Activated B cell treated with CpG ODN at 0.5 μM for 24 hours (primary cell): ENCODE measurements at regions of chr9 and their contacts with region 1.

Region 1: DNA sequence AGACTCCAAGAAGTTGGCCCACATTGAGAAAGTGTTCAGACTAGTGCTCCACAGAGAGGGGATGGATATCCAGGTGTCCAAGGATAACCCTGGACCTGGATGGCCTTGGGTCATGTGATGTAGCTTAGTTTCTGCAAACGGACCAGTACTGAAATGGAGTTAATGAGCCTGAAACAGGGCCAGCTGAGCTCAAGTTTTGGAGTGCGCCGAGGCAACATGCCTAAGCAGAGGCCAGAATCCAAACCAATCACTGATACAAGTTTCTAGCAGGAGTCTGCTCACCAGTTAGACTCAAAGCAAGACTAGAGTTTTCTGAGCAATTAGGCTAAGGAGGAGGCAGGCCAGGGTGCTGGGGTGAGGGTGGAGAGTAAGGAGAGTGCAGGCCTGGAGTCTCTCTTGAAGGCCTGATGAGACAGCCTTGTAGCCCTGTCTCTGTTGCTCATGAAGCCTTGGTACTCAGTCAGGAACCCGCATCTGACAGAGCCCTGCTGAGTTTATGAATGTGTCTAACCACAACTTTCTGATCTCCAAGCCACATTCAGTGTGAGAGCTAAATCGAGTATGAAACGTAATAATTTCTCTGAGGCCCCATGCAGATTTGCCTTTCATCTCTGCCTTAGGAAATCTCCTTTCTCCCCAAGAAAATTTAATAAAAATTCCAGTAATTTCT is 68.9 kb upstream of the EQTN start:
- DNase-seq: no peak
- ATAC-seq: peak; percentile 73
- H3K4me3 Mint-ChIP-seq: peak overlapping the region; percentile 65
- H3K27ac Mint-ChIP-seq: peak overlapping the region; percentile 63
- H3K4me1 Mint-ChIP-seq: peaks cover 61% of the 10 kb centered on the region
- H3K27me3 Mint-ChIP-seq: no peaks in the 10 kb centered on the region
- CTCF ChIP-seq: no peak

Region 2: DNA sequence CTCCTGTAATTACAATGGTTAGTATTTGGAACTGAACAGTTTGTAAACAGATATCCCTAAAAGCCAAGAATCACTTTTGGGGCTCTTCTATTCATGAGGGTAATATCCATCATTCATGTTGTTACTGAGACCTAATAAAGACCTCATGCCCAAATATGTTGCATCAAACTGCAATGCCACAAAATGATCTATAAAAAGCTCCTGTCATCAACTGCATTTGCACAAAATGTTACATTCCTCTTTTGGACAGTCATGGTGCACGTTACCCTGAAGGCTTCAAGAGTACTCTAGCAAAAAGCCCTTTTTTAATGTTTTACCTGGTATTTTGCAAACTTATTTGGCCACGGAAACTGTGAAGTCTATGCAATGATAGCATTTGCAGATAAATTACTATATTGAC is 54.7 kb before region 1 on chr9:
- CTCF ChIA-PET with region 1: no interaction called
- POLR2A ChIA-PET with region 1: no interaction called
- intact Hi-C with region 1: no loop called
- DNase-seq: no peak
- ATAC-seq: no peak
- H3K4me3 Mint-ChIP-seq: no peak overlapping the region
- H3K27ac Mint-ChIP-seq: no peak overlapping the region
- H3K4me1 Mint-ChIP-seq: no peaks in the 10 kb centered on the region
- H3K27me3 Mint-ChIP-seq: no peaks in the 10 kb centered on the region
- CTCF ChIP-seq: no peak

Region 3: GRCh38 chr9:27353474-27354229 is 12.2 kb before region 1 on chr9:
- CTCF ChIA-PET with region 1: interaction called, 4 read pairs
- POLR2A ChIA-PET with region 1: interaction called, 10 read pairs
- intact Hi-C with region 1: loop called (anchors 1 kb)
- DNase-seq: no peak
- ATAC-seq: peak; percentile 78
- H3K4me3 Mint-ChIP-seq: no peak overlapping the region
- H3K27ac Mint-ChIP-seq: peak overlapping the region; percentile 14
- H3K4me1 Mint-ChIP-seq: peaks cover 58% of the 10 kb centered on the region
- H3K27me3 Mint-ChIP-seq: no peaks in the 10 kb centered on the region
- CTCF ChIP-seq: no peak

Region 4: DNA sequence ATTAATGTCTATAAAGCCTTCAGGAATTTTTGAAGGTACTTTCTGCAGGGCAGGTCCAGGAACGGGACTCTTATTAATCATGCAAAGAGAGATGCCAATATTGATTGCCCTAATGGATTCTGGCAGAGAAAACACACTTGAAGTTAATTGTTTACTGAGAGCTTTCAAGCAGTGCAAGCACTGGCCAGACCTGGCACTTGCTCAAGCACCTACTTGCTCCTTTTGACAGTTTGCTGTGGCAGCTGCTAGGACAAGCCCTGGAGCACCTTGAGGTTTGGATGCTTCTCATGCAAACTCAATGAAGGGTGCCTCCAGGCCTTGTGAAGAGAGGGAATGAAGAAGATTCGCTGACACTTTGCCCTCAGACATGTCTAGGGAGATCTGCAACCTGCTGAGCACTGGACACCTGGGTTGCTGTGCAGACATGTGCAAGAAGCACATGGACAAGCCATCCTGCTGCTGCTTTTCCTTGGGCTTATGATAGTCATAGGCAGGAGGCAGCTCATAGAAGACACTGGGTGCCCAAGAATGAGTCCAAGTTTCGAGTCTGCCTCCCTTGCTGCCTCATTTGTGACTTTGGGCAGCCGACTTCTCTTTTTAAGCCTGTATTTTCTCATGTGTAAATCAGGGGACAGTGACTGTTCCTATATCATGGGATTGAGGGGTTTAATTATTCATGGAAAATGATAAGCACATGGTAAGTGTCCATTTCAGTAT is 19.9 kb after region 1 on chr9:
- CTCF ChIA-PET with region 1: interaction called, 3 read pairs
- POLR2A ChIA-PET with region 1: interaction called, 3 read pairs
- intact Hi-C with region 1: loop called (anchors 2 kb)
- DNase-seq: no peak
- ATAC-seq: no peak
- H3K4me3 Mint-ChIP-seq: peak overlapping the region; percentile 19
- H3K27ac Mint-ChIP-seq: no peak overlapping the region
- H3K4me1 Mint-ChIP-seq: peaks cover 86% of the 10 kb centered on the region
- H3K27me3 Mint-ChIP-seq: no peaks in the 10 kb centered on the region
- CTCF ChIP-seq: no peak

Region 5: DNA sequence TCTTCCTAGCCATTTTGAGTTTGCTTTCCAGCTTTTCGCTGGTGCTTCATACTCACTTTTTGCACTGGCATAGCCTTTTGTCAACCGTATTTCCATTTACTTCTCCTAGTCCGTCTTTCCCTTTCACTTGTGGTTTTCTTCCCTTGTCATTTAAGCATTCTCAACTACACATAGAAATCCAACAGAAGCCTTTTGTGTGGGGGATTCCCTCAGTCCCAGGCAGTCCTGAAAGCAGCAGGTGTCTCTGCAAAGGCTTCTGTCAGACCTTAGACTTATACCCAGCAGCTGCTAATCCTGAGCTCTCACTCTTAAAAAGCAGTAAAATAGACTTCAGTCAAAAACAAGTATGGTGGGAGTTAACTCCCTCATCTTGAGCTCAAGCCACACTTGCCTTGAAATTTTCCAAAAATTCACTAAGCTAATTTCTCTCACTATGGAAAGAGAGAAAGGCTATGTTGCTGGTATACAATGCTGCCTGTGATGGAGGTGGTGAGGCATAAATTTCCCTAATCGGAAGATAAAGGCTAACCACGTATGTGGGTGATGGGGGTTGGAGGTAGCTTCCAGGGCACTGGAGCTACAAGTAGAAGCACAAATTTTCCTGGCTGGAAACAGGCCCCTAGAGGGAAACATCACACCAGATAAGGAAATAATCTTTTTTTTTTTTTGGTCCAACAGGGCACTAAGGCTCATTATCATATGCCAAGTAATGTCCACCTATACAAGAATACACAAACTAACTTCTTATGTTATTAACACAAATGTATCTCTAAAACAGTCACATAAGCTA is 123.4 kb after region 1 on chr9:
- CTCF ChIA-PET with region 1: no interaction called
- POLR2A ChIA-PET with region 1: interaction called, 4 read pairs
- intact Hi-C with region 1: loop called (anchors 2 kb)
- DNase-seq: no peak
- ATAC-seq: peak; percentile 40
- H3K4me3 Mint-ChIP-seq: peak overlapping the region; percentile 20
- H3K27ac Mint-ChIP-seq: peak overlapping the region; percentile 46
- H3K4me1 Mint-ChIP-seq: peaks cover 78% of the 10 kb centered on the region
- H3K27me3 Mint-ChIP-seq: no peaks in the 10 kb centered on the region
- CTCF ChIP-seq: no peak